ENCODE measurements at regions of chr17 and their contacts with region 1.

Region 1: GRCh38 chr17:1365445-1366039 is 34.5 kb downstream of the YWHAE start:
- DNase-seq: peak in 4 of 5 donors; percentile 47 to 65 (median 58)
- ATAC-seq: peak; percentile 40 to 75 (median 64)
- H3K4me3 ChIP-seq: peak overlapping the region in 4 of 12 donors; percentile 7 to 24 (median 12)
- H3K27ac ChIP-seq: peak overlapping the region in 5 of 12 donors; percentile 2 to 30 (median 21)
- H3K4me1 ChIP-seq: peaks cover 20 to 92% (median 78%) of the 10 kb centered on the region in 12 donors
- H3K27me3 ChIP-seq: no peaks in the 10 kb centered on the region
- CTCF ChIP-seq: peak; percentile 79 to 93 (median 89)
- POLR2A ChIP-seq: no peak

Region 2: GRCh38 chr17:1312261-1312870 is 53.2 kb before region 1 on chr17:
- intact Hi-C with region 1: no loop called
- DNase-seq: no peak
- ATAC-seq: no peak
- H3K4me3 ChIP-seq: no peak overlapping the region
- H3K27ac ChIP-seq: no peak overlapping the region
- H3K4me1 ChIP-seq: peaks cover 0 to 10% (median 0%) of the 10 kb centered on the region in 12 donors
- H3K27me3 ChIP-seq: peaks cover 0 to 31% (median 0%) of the 10 kb centered on the region in 9 donors
- CTCF ChIP-seq: no peak
- POLR2A ChIP-seq: no peak

Region 3: DNA sequence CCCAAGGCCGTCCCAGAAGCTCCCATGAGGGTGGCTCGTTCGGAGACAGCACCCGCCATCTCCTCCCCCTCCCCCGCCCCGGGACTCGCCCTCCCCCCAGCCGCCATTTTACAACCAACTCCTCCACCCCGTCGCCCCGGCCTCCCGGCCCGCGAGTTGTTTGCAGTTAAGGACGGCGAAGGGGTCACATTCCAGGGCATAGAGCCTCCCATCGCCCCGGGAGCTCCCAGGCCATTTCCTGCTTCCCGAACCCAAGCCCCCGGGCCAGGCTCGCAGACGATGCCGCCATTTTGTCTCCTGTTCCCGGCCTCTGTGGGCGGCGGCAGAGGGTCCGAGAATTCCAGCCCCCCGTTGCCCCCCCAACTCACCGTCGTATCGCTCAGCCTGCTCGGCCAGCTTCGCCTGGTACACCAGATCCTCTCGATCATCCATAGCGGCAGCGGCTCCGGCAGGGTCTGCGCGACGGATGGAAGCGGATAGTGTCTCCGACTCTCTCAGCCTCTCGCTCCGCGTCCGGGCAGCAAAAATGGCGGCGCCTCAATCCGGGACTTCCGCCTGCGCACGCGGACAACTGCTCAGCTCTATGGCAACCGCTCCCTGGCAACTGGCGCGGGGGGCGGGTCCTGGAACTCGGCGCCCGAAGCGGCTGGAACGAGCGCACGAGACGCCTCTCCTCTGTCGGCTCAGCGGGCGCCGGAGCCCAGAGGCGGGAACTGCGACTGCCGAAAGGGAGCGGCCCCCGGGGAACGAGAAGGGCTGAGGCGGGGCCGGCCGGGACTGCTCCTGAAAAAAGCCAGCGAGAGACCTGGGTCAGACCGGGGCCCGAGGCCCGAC is 34.4 kb after region 1 on chr17 and contains the start of gene YWHAE:
- intact Hi-C with region 1: loop called in 1 of 10 experiments (anchors 5 kb)
- DNase-seq: peak; percentile 98 to 99 (median 98)
- ATAC-seq: peak; percentile 97 to 99 (median 98)
- H3K4me3 ChIP-seq: peak within 1 kb of the TSS; percentile 76 to 98 (median 88)
- H3K27ac ChIP-seq: peak within 1 kb of the TSS; percentile 93 to 99 (median 98)
- H3K4me1 ChIP-seq: peaks cover 6 to 49% (median 27%) of the 10 kb centered on the region in 12 donors
- H3K27me3 ChIP-seq: no peaks in the 10 kb centered on the region
- CTCF ChIP-seq: no peak
- POLR2A ChIP-seq: peak in 1 of 2 donors; percentile 87
- total RNA-seq, gene YWHAE: 562 to 1,150 (median 618) TPM

Region 4: DNA sequence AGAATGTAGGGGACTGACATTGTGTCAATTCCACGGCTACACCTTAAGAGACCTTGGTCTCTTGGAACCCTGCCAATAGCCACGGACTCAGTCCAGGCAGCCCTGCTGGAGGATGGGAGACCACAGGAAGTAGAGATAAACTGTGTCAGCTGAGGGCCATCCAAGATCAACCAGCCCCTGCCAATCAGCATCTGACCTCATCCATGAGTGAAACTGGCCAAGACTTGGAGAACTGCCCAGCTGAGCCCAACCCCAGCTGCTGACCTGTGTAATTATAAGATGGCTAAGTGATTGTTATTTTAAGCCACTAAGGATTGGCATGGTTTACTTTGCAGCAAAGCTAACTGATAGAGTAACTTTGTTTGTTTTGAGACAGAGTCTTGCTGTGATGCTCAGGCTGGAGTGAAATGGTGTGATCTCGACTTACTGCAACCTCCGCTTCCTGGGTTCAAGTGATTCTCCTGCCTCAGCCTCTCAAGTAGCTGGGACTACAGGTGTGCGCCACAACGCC is 47.8 kb after region 1 on chr17:
- intact Hi-C with region 1: loop called in 1 of 10 experiments (anchors 10 kb)
- DNase-seq: peak; percentile 72 to 91 (median 87)
- ATAC-seq: peak; percentile 83 to 95 (median 92)
- H3K4me3 ChIP-seq: no peak overlapping the region
- H3K27ac ChIP-seq: peak overlapping the region in 8 of 12 donors; percentile 29 to 62 (median 46)
- H3K4me1 ChIP-seq: peaks cover 0 to 23% (median 17%) of the 10 kb centered on the region in 12 donors
- H3K27me3 ChIP-seq: no peaks in the 10 kb centered on the region
- CTCF ChIP-seq: no peak
- POLR2A ChIP-seq: no peak

Region 5: DNA sequence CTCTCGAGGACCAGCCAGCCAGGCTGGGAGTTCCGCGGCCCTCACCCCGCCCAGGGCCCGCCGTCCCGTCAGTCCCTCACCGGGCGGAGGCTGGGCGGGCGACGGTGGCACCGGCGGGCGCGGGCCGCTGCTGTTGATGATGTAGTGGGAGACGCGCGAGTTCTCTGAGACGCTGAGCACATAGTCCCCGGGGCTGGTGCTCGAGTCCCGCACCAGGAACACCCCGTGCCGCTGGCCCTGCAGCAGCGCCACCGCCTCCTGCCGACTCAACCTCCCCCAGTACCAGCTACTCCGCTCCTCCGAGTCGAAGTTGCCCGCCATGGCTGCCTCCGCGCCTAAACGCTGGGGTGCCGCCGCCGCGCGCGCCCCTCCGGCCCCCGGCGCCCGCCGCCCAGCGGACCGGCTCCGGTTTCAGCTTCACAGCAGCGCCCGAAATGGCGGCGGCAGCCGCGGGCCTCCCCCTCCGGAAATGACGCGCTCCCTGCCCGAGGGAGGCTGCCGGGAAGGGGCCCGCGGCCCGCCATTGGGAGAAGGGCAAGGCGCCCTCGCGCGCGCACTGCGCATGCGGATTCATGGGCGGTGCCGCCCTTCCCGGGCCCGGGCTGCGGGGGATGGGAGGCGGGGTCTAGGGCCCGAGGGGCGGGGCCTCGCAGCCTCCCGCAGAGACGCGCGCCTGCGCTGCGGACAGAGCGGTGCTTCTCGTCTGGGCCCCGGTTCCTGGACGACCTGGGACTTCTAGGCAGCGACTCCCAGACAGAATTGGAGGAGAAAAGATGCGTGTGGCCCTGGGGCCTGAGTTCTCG is 90.5 kb after region 1 on chr17 and contains the start of gene CRK:
- intact Hi-C with region 1: loop called in 6 of 10 experiments (anchors 2 to 10 kb)
- DNase-seq: peak; percentile 96 to 100 (median 98)
- ATAC-seq: peak; percentile 90 to 96 (median 94)
- H3K4me3 ChIP-seq: peak within 1 kb of the TSS; percentile 84 to 100 (median 94)
- H3K27ac ChIP-seq: peak within 1 kb of the TSS; percentile 89 to 99 (median 98)
- H3K4me1 ChIP-seq: peaks cover 6 to 62% (median 54%) of the 10 kb centered on the region in 12 donors
- H3K27me3 ChIP-seq: no peaks in the 10 kb centered on the region
- CTCF ChIP-seq: peak in 4 of 12 donors; percentile 11 to 48 (median 16)
- POLR2A ChIP-seq: peak; percentile 71 to 93
- total RNA-seq, gene CRK: 28.8 to 47.0 (median 42.2) TPM

Region 6: GRCh38 chr17:1467898-1468492 is 102.5 kb after region 1 on chr17:
- intact Hi-C with region 1: loop called in 1 of 10 experiments (anchors 5 kb)
- DNase-seq: no peak
- ATAC-seq: no peak
- H3K4me3 ChIP-seq: no peak overlapping the region
- H3K27ac ChIP-seq: no peak overlapping the region
- H3K4me1 ChIP-seq: peaks cover 0 to 19% (median 0%) of the 10 kb centered on the region in 12 donors
- H3K27me3 ChIP-seq: no peaks in the 10 kb centered on the region
- CTCF ChIP-seq: no peak
- POLR2A ChIP-seq: no peak

Measured in heart left ventricle (tissue), 16 donors.